ENCODE measurements at regions of chr5 and their contacts with region 1.

Region 1: DNA sequence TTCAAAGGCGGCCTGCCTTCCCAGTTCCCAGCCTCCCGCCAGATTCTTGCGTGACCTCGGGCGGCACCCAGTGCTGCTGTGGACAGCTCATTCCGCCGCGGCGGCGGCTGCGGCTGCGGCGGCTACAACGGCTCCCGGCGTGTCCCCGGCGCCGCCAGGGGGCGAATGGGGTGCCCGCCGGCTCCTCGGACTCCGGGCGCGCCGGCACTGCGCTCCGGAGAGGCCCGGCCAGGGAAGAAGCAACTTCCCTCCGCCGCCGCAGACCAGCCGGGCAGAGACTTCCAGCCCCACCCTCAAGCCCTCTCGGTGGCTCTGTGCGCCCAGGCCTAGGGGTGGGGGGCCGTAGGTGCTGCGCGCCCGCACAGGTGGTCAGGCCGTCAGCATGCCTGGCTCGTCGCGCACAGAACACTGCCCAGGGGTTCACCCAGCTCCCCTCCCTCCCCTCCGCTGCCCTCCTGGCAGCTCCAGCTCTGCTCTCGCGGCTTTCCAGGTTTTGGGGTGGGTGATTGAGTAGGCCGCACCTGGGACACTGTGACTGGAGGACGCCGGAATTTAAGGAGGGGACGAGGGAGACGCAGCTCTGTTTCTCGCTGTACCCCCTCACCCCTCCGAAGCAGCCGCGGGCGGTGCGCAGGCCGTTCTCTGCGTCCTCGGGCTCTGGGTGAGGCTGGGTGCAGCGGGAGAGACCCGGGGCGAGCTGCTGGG is 20.2 kb downstream of the IGIP start:
- DNase-seq: peak; percentile 41
- H3K4me3 Mint-ChIP-seq: no peak overlapping the region
- H3K27ac Mint-ChIP-seq: no peak overlapping the region
- H3K4me1 Mint-ChIP-seq: peaks cover 5% of the 10 kb centered on the region
- H3K27me3 Mint-ChIP-seq: peaks cover 42% of the 10 kb centered on the region

Region 2: DNA sequence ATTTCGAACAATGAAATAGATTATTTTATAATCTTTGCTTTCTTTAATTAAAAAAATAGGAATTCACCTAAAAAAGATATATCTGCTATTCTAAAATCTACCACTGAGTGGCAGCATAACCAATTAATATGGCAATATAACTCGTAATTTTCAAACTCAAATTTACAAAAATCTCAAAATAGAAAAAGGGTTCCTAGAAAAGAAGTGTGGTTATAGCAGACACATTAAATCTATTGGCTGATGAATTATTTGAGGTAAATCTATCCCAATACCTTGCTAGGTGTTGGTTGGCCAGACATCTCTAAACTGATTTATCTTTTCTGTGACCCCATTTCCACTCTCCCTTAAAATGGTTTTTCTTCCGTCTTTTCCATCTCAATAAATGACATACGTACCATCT is 72.7 kb before region 1 on chr5:
- intact Hi-C with region 1: loop called (anchors 1 kb)
- DNase-seq: no peak
- H3K4me3 Mint-ChIP-seq: no peak overlapping the region
- H3K27ac Mint-ChIP-seq: no peak overlapping the region
- H3K4me1 Mint-ChIP-seq: no peaks in the 10 kb centered on the region
- H3K27me3 Mint-ChIP-seq: peaks cover 22% of the 10 kb centered on the region

Region 3: GRCh38 chr5:140261403-140262171 is 115.6 kb after region 1 on chr5:
- intact Hi-C with region 1: no loop called
- DNase-seq: no peak
- H3K4me3 Mint-ChIP-seq: no peak overlapping the region
- H3K27ac Mint-ChIP-seq: no peak overlapping the region
- H3K4me1 Mint-ChIP-seq: peaks cover 40% of the 10 kb centered on the region
- H3K27me3 Mint-ChIP-seq: no peaks in the 10 kb centered on the region

Region 4: DNA sequence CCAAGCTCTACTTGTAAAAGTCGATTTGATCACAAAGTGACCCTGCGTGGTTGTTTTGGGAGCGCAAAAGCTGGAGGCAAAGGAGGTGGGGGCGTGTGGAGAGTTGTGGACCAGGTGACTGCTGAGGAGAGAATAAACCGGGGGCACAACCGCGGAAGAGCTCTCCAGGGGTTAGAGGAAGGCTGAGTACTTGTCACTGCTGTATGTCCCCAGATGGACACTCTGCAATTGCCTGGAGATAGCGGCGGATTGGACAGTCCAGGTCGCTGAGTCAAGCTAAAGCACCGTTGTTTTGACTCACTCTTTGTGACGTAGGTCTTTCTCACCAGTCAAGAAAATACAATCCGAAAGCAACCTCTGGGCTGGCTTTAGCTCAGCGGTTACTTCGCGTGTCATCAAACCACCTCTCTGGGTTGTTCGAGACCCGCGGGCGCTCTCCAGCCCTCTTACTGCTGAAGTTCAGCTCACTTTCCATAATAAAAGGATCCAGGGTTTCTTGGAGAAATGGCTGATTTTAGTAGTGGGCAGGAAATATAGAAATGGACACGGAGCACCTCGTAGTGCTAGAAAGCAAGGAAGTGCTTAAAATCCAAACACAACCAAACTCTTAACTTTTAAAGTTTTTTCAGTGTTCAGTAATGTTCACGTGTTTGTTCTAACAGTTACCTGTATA is 580.0 kb after region 1 on chr5:
- intact Hi-C with region 1: no loop called
- DNase-seq: peak; percentile 72
- H3K4me3 Mint-ChIP-seq: peak overlapping the region; percentile 77
- H3K27ac Mint-ChIP-seq: peak overlapping the region; percentile 91
- H3K4me1 Mint-ChIP-seq: peaks cover 11% of the 10 kb centered on the region
- H3K27me3 Mint-ChIP-seq: peaks cover 21% of the 10 kb centered on the region